Psoas muscle (tissue), 8 donors: ENCODE measurements at regions of chr20 and their contacts with region 1.

Region 1: GRCh38 chr20:9215539-9215938 is 146.7 kb downstream of the PLCB4 start:
- DNase-seq: no peak
- ATAC-seq: no peak
- H3K4me3 ChIP-seq: no peak overlapping the region
- H3K27ac ChIP-seq: no peak overlapping the region
- H3K4me1 ChIP-seq: peaks cover 17% of the 10 kb centered on the region
- H3K27me3 ChIP-seq: no peaks in the 10 kb centered on the region
- CTCF ChIP-seq: peak; percentile 29

Region 2: GRCh38 chr20:10228330-10228729 is 1012.8 kb after region 1 on chr20:
- intact Hi-C with region 1: no loop called
- DNase-seq: no peak
- ATAC-seq: no peak
- H3K4me3 ChIP-seq: no peak overlapping the region
- H3K27ac ChIP-seq: no peak overlapping the region
- H3K4me1 ChIP-seq: no peaks in the 10 kb centered on the region
- H3K27me3 ChIP-seq: peaks cover 0 to 5% (median 0%) of the 10 kb centered on the region in 3 donors
- CTCF ChIP-seq: no peak

Region 3: GRCh38 chr20:10769700-10770099 is 1554.2 kb after region 1 on chr20:
- intact Hi-C with region 1: loop called in 1 of 2 experiments (anchors 5 kb)
- DNase-seq: no peak
- ATAC-seq: no peak
- H3K4me3 ChIP-seq: no peak overlapping the region
- H3K27ac ChIP-seq: no peak overlapping the region
- H3K4me1 ChIP-seq: no peaks in the 10 kb centered on the region
- H3K27me3 ChIP-seq: no peaks in the 10 kb centered on the region
- CTCF ChIP-seq: no peak